ENCODE measurements at regions of chr10 and their contacts with region 1.

Region 1: GRCh38 chr10:29590915-29591650 is 43.7 kb downstream of the SVIL start:
- DNase-seq: no peak
- H3K4me3 Mint-ChIP-seq: peak overlapping the region; percentile 15
- H3K27ac Mint-ChIP-seq: peak overlapping the region; percentile 92
- H3K4me1 Mint-ChIP-seq: peaks cover 24% of the 10 kb centered on the region
- H3K27me3 Mint-ChIP-seq: no peaks in the 10 kb centered on the region
- CTCF ChIP-seq: no peak

Region 2: GRCh38 chr10:29517352-29517923 is 73.6 kb before region 1 on chr10:
- CTCF ChIA-PET with region 1: no interaction called
- POLR2A ChIA-PET with region 1: no interaction called
- intact Hi-C with region 1: loop called (anchors 1 kb)
- DNase-seq: peak; percentile 34
- H3K4me3 Mint-ChIP-seq: no peak overlapping the region
- H3K27ac Mint-ChIP-seq: no peak overlapping the region
- H3K4me1 Mint-ChIP-seq: no peaks in the 10 kb centered on the region
- H3K27me3 Mint-ChIP-seq: no peaks in the 10 kb centered on the region
- CTCF ChIP-seq: peak; percentile 47

Region 3: GRCh38 chr10:29555746-29556481 is 35.2 kb before region 1 on chr10:
- CTCF ChIA-PET with region 1: interaction called, 3 read pairs
- POLR2A ChIA-PET with region 1: interaction called, 3 read pairs
- intact Hi-C with region 1: loop called (anchors 5 kb)
- DNase-seq: peak; percentile 65
- H3K4me3 Mint-ChIP-seq: no peak overlapping the region
- H3K27ac Mint-ChIP-seq: no peak overlapping the region
- H3K4me1 Mint-ChIP-seq: peaks cover 12% of the 10 kb centered on the region
- H3K27me3 Mint-ChIP-seq: no peaks in the 10 kb centered on the region
- CTCF ChIP-seq: no peak

Region 4: GRCh38 chr10:29651767-29652166 is 60.7 kb after region 1 on chr10:
- CTCF ChIA-PET with region 1: no interaction called
- POLR2A ChIA-PET with region 1: no interaction called
- intact Hi-C with region 1: no loop called
- DNase-seq: no peak
- H3K4me3 Mint-ChIP-seq: no peak overlapping the region
- H3K27ac Mint-ChIP-seq: no peak overlapping the region
- H3K4me1 Mint-ChIP-seq: peaks cover 24% of the 10 kb centered on the region
- H3K27me3 Mint-ChIP-seq: no peaks in the 10 kb centered on the region
- CTCF ChIP-seq: no peak

Region 5: GRCh38 chr10:29886299-29886698 is 295.2 kb after region 1 on chr10:
- CTCF ChIA-PET with region 1: no interaction called
- POLR2A ChIA-PET with region 1: no interaction called
- intact Hi-C with region 1: no loop called
- DNase-seq: no peak
- H3K4me3 Mint-ChIP-seq: no peak overlapping the region
- H3K27ac Mint-ChIP-seq: no peak overlapping the region
- H3K4me1 Mint-ChIP-seq: no peaks in the 10 kb centered on the region
- H3K27me3 Mint-ChIP-seq: peaks cover 15% of the 10 kb centered on the region
- CTCF ChIP-seq: no peak

Measured in MCF 10A (cell line).